ENCODE measurements at regions of chr11 and their contacts with region 1.

Region 1: GRCh38 chr11:2975594-2975993 is 16.5 kb downstream of the NAP1L4 start:
- DNase-seq: peak; percentile 20 to 70 (median 43)
- H3K4me3 ChIP-seq: no peak overlapping the region
- H3K4me3 Mint-ChIP-seq: peak overlapping the region in 1 of 7 donors; percentile 27
- H3K27ac ChIP-seq: no peak overlapping the region
- H3K27ac Mint-ChIP-seq: peak overlapping the region in 5 of 8 donors; percentile 17 to 78 (median 66)
- H3K4me1 ChIP-seq: peaks cover 10% of the 10 kb centered on the region
- H3K4me1 Mint-ChIP-seq: peaks cover 37 to 60% (median 47%) of the 10 kb centered on the region in 3 donors
- H3K27me3 ChIP-seq: no peaks in the 10 kb centered on the region
- H3K27me3 Mint-ChIP-seq: peaks cover 0 to 1% of the 10 kb centered on the region in 2 donors

Region 2: GRCh38 chr11:2992234-2992996 is 16.8 kb after region 1 on chr11 and contains the start of gene NAP1L4:
- CTCF ChIA-PET with region 1: interaction called, 17 read pairs
- POLR2A ChIA-PET with region 1: interaction called, 6 read pairs
- DNase-seq: peak; percentile 94 to 98 (median 95)
- H3K4me3 ChIP-seq: peak within 1 kb of the TSS; percentile 85
- H3K4me3 Mint-ChIP-seq: peak within 1 kb of the TSS; percentile 99 to 100 (median 99)
- H3K27ac ChIP-seq: peak within 1 kb of the TSS; percentile 86
- H3K27ac Mint-ChIP-seq: peak within 1 kb of the TSS; percentile 97 to 100 (median 98)
- H3K4me1 ChIP-seq: peaks cover 20% of the 10 kb centered on the region
- H3K4me1 Mint-ChIP-seq: peaks cover 31 to 36% (median 32%) of the 10 kb centered on the region in 3 donors
- H3K27me3 ChIP-seq: no peaks in the 10 kb centered on the region
- H3K27me3 Mint-ChIP-seq: peaks cover 0 to 3% of the 10 kb centered on the region in 2 donors
- total RNA-seq, gene NAP1L4: 273 to 280 TPM

Region 3: DNA sequence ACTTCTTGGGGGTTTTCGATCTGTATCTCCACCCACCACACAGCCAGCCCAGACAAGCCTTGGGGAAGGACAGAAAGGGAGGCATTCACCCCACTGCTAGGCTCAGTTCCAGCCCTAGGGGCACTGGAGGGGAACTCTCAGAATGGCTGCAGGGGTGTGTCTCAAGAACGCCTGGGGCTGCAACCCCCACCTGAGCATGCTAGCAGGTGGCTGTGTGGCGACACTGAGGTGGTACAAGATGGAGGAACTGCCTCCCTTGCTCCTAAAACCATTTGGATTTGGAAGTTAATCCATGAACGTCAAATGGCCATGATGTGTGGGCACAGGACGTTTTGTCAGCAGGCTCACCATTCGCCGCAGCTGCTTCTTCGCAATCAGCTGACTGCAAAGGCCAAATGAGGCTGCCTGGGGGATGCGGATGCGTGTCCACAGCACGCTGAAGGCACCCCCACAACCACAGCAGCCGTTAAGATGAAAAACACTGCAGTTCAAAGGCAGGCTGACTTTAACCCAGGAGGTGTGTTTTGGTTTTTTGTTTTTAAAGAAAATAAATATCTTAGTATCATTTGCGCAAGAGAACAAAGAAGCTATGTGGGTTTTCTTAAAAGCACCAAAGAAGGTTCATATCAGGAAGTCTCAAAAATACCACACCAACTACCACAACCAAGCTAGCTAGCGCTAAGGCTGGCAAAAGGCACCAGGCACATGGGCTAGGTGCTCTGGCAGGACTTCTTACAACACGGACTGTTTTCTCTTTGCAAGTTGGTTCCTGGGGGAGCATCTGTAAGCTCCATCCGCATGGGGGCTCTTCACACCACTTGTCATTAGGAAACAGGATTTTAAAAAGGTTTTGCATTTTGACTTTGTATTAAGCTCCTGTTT is 38.7 kb after region 1 on chr11:
- CTCF ChIA-PET with region 1: interaction called, 32 read pairs
- POLR2A ChIA-PET with region 1: interaction called, 3 read pairs
- DNase-seq: peak; percentile 53 to 95 (median 88)
- H3K4me3 ChIP-seq: peak overlapping the region; percentile 58
- H3K4me3 Mint-ChIP-seq: peak overlapping the region; percentile 6 to 76 (median 71)
- H3K27ac ChIP-seq: no peak overlapping the region
- H3K27ac Mint-ChIP-seq: peak overlapping the region; percentile 74 to 91 (median 88)
- H3K4me1 ChIP-seq: peaks cover 45% of the 10 kb centered on the region
- H3K4me1 Mint-ChIP-seq: peaks cover 28 to 81% (median 57%) of the 10 kb centered on the region in 3 donors
- H3K27me3 ChIP-seq: no peaks in the 10 kb centered on the region
- H3K27me3 Mint-ChIP-seq: no peaks in the 10 kb centered on the region

Region 4: GRCh38 chr11:3021125-3021524 is 45.5 kb after region 1 on chr11:
- CTCF ChIA-PET with region 1: interaction called, 36 read pairs
- POLR2A ChIA-PET with region 1: no interaction called
- DNase-seq: peak in 3 of 5 donors; percentile 39 to 66 (median 64)
- H3K4me3 ChIP-seq: no peak overlapping the region
- H3K4me3 Mint-ChIP-seq: no peak overlapping the region
- H3K27ac ChIP-seq: no peak overlapping the region
- H3K27ac Mint-ChIP-seq: peak overlapping the region in 1 of 8 donors; percentile 74
- H3K4me1 ChIP-seq: peaks cover 35% of the 10 kb centered on the region
- H3K4me1 Mint-ChIP-seq: peaks cover 19 to 60% (median 47%) of the 10 kb centered on the region in 3 donors
- H3K27me3 ChIP-seq: no peaks in the 10 kb centered on the region
- H3K27me3 Mint-ChIP-seq: no peaks in the 10 kb centered on the region